H1 (cell line): ENCODE measurements at regions of chr20 and their contacts with region 1.

Region 1: GRCh38 chr20:53187392-53188068 is 215.4 kb downstream of the TSHZ2 start:
- DNase-seq: no peak
- H3K4me3 ChIP-seq: no peak overlapping the region
- H3K27ac ChIP-seq: no peak overlapping the region
- H3K4me1 ChIP-seq: peaks cover 0 to 2% (median under 1%) of the 10 kb centered on the region in 4 experiments; a peak in 2 of 7 replicates
- H3K27me3 ChIP-seq: no peaks in the 10 kb centered on the region
- CTCF ChIP-seq: no peak
- EP300 ChIP-seq: no peak
- POLR2A ChIP-seq: no peak
- RAD21 ChIP-seq: no peak

Region 2: DNA sequence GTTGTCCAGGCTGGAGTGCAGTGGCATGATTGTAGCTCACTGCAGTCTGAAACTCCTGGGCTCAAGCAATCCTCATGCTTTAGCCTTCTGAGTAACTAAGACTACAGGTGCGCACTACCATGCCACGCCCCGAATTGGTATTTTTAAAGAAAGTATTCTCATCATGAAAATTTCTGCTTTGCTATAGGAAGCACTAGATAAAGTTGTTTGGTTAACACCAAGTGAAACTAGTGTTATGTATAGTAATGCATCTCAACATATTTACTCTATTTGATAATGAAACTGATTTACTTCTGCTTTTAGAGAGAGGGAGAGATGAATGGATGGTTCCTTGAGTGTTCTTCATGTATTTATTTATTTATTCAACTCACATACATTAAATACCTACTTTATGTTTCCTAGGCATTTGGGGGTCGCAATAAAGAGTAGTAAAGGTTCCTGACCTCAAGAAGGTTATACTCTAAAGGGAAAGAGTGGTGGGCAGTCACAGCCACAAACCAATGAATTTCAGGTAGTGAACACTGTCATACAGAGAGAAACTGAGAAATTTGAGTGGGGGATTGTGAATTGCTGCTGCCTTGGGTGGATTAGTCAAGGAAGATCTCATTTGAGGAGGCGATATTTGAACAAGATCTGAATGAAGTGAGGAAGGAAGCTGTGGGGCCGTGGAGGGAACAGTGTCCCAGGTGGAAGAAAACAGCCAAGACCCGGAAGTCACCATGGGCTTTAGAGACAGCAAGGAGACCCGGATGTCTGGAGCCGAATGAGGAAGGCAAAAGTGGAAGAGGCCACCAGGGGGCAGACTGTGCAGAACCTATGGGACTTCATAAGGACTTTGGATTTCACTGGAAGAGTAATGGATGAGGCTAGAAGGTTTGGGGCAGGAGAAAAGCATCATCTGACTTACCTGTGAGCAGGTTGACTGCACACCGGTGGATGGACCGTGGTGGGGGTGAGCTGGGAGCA is 29.8 kb before region 1 on chr20:
- CTCF ChIA-PET with region 1: interaction called, 11 read pairs
- POLR2A ChIA-PET with region 1: no interaction called
- DNase-seq: peak; percentile 47 to 87
- H3K4me3 ChIP-seq: no peak overlapping the region
- H3K27ac ChIP-seq: no peak overlapping the region
- H3K4me1 ChIP-seq: peaks cover 0 to 3% (median under 1%) of the 10 kb centered on the region in 4 experiments; a peak in 3 of 7 replicates
- H3K27me3 ChIP-seq: no peaks in the 10 kb centered on the region; a peak in 3 of 7 replicates
- CTCF ChIP-seq: peak; percentile 63 to 79 (median 77)
- EP300 ChIP-seq: no peak
- POLR2A ChIP-seq: no peak
- RAD21 ChIP-seq: peak; percentile 64 to 75

Region 3: DNA sequence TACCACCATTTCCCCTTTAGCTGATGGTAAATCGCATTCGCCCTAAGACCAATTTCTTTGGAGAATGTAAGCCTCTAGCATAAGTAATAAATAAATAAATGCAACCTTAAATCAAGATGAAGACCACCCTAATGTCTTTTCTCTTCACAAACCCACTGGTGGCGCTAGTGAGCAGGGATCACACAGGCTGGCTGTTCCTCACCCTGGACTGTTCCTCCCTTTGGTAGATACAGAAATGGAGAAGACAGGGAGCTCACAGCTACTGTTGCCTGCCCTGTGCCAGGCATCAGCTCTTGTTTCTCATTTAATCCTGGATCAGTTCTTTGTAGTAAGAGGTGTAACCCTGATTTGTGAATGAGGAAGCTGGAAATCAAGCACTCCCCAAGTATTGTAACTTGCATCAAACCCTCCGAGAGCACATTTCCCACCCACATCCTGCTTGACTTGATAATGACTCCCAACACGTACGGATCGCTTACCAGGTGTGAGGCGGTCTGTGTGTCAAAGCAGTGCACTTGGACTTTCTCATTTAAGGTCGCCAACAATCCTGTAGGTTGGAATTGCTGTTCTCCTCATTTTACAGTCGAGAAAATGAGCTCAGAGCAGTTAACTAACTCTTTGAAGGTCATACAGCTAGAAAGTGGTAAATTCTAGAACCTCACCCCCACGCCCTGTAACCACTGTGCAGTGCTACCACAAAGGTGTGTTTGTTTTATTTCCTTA is 20.7 kb after region 1 on chr20:
- CTCF ChIA-PET with region 1: interaction called, 15 read pairs
- POLR2A ChIA-PET with region 1: no interaction called
- DNase-seq: peak in 1 of 2 experiments; percentile 84
- H3K4me3 ChIP-seq: no peak overlapping the region
- H3K27ac ChIP-seq: no peak overlapping the region
- H3K4me1 ChIP-seq: peaks cover 0 to 14% (median 5%) of the 10 kb centered on the region in 4 experiments; a peak in 6 of 7 replicates
- H3K27me3 ChIP-seq: no peaks in the 10 kb centered on the region
- CTCF ChIP-seq: peak; percentile 64 to 77 (median 74)
- EP300 ChIP-seq: peak in 1 of 2 experiments; percentile 70; a peak in 1 of 3 replicates
- POLR2A ChIP-seq: no peak
- RAD21 ChIP-seq: peak; percentile 63 to 72

Region 4: DNA sequence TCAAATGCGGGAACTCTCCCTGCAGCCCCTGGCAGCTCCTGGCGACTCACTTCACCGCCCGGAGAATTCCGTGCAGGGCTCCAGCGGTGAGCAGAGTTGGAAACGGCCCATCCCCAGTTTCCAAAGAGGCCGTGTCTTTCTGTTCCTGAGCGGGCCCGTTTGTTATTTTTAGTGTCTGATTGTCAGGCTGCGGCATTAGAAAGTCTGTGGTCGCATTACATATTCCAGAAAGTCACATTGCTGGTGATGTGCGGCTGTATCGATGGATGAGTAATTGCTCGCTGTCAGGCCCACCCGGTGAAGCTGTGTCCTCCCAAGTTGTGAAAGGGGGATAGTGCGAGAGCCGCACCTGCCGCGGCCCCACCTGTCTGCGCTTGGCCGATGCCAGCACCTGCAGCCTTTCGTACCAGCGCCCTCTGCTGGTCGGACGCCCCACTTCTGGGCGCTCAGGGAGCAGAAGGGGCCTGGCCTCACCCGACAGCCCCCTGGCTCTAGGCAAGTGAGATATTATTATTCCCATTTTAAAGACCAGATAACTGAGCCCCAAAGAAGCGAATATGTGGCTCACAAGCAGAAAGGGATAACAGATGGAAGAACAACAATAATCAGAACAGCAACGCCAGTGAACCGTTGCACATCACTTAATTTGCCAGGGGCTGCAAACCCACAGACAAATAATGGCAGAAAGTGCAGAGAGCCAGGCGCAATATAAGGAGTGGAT is 29.5 kb after region 1 on chr20:
- CTCF ChIA-PET with region 1: interaction called, 31 read pairs
- POLR2A ChIA-PET with region 1: no interaction called
- DNase-seq: peak; percentile 68 to 97
- H3K4me3 ChIP-seq: peak overlapping the region in 1 of 4 experiments; percentile 34; a peak in 1 of 8 replicates
- H3K27ac ChIP-seq: no peak overlapping the region
- H3K4me1 ChIP-seq: peaks cover 0 to 4% (median 2%) of the 10 kb centered on the region in 4 experiments; a peak in 3 of 7 replicates
- H3K27me3 ChIP-seq: peaks cover 0 to 4% (median 0%) of the 10 kb centered on the region in 4 experiments; a peak in 3 of 7 replicates
- CTCF ChIP-seq: peak; percentile 85 to 89 (median 88)
- EP300 ChIP-seq: no peak
- POLR2A ChIP-seq: no peak
- RAD21 ChIP-seq: peak; percentile 76 to 86

Region 5: GRCh38 chr20:53227523-53227922 is 40.0 kb after region 1 on chr20:
- CTCF ChIA-PET with region 1: no interaction called
- POLR2A ChIA-PET with region 1: no interaction called
- DNase-seq: no peak
- H3K4me3 ChIP-seq: no peak overlapping the region
- H3K27ac ChIP-seq: no peak overlapping the region
- H3K4me1 ChIP-seq: peaks cover 0 to 5% (median 0%) of the 10 kb centered on the region in 4 experiments; a peak in 2 of 7 replicates
- H3K27me3 ChIP-seq: no peaks in the 10 kb centered on the region
- CTCF ChIP-seq: no peak
- EP300 ChIP-seq: no peak
- POLR2A ChIP-seq: no peak
- RAD21 ChIP-seq: no peak

Region 6: GRCh38 chr20:53547664-53548239 is 360.2 kb after region 1 on chr20:
- CTCF ChIA-PET with region 1: interaction called, 11 read pairs
- POLR2A ChIA-PET with region 1: no interaction called
- DNase-seq: peak; percentile 9 to 56
- H3K4me3 ChIP-seq: no peak overlapping the region
- H3K27ac ChIP-seq: no peak overlapping the region
- H3K4me1 ChIP-seq: no peaks in the 10 kb centered on the region; a peak in 2 of 7 replicates
- H3K27me3 ChIP-seq: no peaks in the 10 kb centered on the region
- CTCF ChIP-seq: peak in 2 of 3 experiments; percentile 81 to 86; a peak in 3 of 4 replicates
- EP300 ChIP-seq: no peak
- POLR2A ChIP-seq: no peak
- RAD21 ChIP-seq: peak; percentile 98 to 99